MCF 10A (cell line): ENCODE measurements at regions of chr1 and their contacts with region 1.

Region 1: GRCh38 chr1:117059678-117060440 is at the start of gene TTF2:
- DNase-seq: peak; percentile 100
- H3K4me3 Mint-ChIP-seq: no peak within 1 kb of the TSS
- H3K27ac Mint-ChIP-seq: no peak within 1 kb of the TSS
- H3K4me1 Mint-ChIP-seq: peaks cover 30% of the 10 kb centered on the region
- H3K27me3 Mint-ChIP-seq: no peaks in the 10 kb centered on the region
- CTCF ChIP-seq: no peak
- total RNA-seq, gene TTF2: 28.4 and 38.6 TPM in 2 replicates

Region 2: GRCh38 chr1:116570358-116571200 is 489.3 kb before region 1 on chr1 and contains the start of gene CD58:
- CTCF ChIA-PET with region 1: interaction called, 9 read pairs
- POLR2A ChIA-PET with region 1: interaction called, 7 read pairs
- intact Hi-C with region 1: loop called (anchors 1 kb)
- DNase-seq: peak; percentile 86
- H3K4me3 Mint-ChIP-seq: peak within 1 kb of the TSS; percentile 69
- H3K27ac Mint-ChIP-seq: peak within 1 kb of the TSS; percentile 91
- H3K4me1 Mint-ChIP-seq: peaks cover 30% of the 10 kb centered on the region
- H3K27me3 Mint-ChIP-seq: no peaks in the 10 kb centered on the region
- CTCF ChIP-seq: peak; percentile 74
- total RNA-seq, gene CD58: 11.0 and 13.4 TPM in 2 replicates

Region 3: GRCh38 chr1:116737020-116737854 is 322.6 kb before region 1 on chr1:
- CTCF ChIA-PET with region 1: interaction called, 59 read pairs
- POLR2A ChIA-PET with region 1: interaction called, 3 read pairs
- intact Hi-C with region 1: loop called (anchors 1 kb)
- DNase-seq: peak; percentile 60
- H3K4me3 Mint-ChIP-seq: no peak overlapping the region
- H3K27ac Mint-ChIP-seq: no peak overlapping the region
- H3K4me1 Mint-ChIP-seq: no peaks in the 10 kb centered on the region
- H3K27me3 Mint-ChIP-seq: peaks cover 11% of the 10 kb centered on the region
- CTCF ChIP-seq: peak; percentile 87

Region 4: GRCh38 chr1:116881879-116882520 is 177.9 kb before region 1 on chr1:
- CTCF ChIA-PET with region 1: interaction called, 3 read pairs
- POLR2A ChIA-PET with region 1: interaction called, 13 read pairs
- intact Hi-C with region 1: no loop called
- DNase-seq: peak; percentile 86
- H3K4me3 Mint-ChIP-seq: no peak overlapping the region
- H3K27ac Mint-ChIP-seq: peak overlapping the region; percentile 55
- H3K4me1 Mint-ChIP-seq: peaks cover 8% of the 10 kb centered on the region
- H3K27me3 Mint-ChIP-seq: no peaks in the 10 kb centered on the region
- CTCF ChIP-seq: peak; percentile 12

Region 5: DNA sequence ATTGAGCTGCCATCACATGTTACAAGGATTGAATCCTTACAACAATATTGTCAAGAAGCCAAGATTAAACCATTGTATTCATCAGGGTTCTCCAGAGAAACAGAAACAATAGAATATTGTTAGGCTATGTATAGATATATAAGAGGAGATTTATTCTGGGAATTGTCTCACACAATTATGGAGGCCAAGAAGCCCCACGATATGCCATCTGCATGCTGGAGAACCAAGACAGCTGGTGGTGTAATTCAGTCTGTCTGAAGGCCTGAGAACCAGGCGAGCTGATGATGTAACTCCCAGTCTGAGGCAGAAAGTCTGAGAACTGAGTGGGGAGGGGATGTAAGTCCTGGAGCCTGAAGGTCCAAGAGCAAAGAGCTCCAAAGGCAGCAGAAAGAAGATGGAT is 14.2 kb before region 1 on chr1:
- CTCF ChIA-PET with region 1: interaction called, 13 read pairs
- POLR2A ChIA-PET with region 1: no interaction called
- intact Hi-C with region 1: no loop called
- DNase-seq: no peak
- H3K4me3 Mint-ChIP-seq: no peak overlapping the region
- H3K27ac Mint-ChIP-seq: no peak overlapping the region
- H3K4me1 Mint-ChIP-seq: no peaks in the 10 kb centered on the region
- H3K27me3 Mint-ChIP-seq: no peaks in the 10 kb centered on the region
- CTCF ChIP-seq: no peak

Region 6: DNA sequence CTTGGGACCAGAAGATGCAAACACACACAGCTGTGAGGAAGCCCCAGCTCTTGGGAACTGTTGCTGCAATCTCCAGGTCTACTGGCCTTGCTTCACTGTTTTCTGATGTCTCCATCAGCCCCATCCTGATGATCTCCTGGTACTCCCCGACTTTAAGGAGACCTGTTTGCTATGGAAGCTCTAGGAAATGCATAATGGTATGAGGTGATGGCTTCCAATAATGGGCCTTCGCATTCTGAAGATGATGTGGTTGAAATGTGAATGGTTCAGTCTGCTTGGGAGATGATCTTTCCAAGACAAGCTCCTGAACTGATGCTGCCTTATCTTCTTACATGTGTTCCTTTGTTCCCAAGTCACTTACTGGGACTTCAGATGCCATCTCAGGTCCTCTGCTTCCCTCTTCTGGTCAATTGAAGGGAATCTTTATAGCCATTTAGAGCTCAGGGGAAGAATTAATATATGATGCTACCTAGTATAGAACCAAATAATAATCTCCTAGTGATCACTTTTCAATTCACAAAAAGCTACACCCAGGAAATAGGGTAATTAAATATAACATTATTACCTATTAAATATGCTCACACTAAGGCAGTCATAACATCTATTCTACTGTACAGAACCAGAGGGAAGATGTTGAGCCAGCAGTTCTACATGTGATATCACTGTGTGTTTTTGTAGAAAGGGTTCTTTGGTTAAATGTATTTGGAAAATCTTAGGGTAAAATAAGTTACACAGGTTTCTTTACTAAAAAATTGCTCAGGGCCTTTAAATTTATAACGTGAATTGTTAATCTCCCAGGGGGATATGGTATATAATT is 224.7 kb after region 1 on chr1:
- CTCF ChIA-PET with region 1: interaction called, 110 read pairs
- POLR2A ChIA-PET with region 1: interaction called, 13 read pairs
- intact Hi-C with region 1: no loop called
- DNase-seq: peak; percentile 73
- H3K4me3 Mint-ChIP-seq: no peak overlapping the region
- H3K27ac Mint-ChIP-seq: no peak overlapping the region
- H3K4me1 Mint-ChIP-seq: no peaks in the 10 kb centered on the region
- H3K27me3 Mint-ChIP-seq: no peaks in the 10 kb centered on the region
- CTCF ChIP-seq: peak; percentile 71

Region 7: GRCh38 chr1:117367047-117368018 is 307.5 kb after region 1 on chr1 and contains the start of gene MAN1A2:
- CTCF ChIA-PET with region 1: no interaction called
- POLR2A ChIA-PET with region 1: interaction called, 12 read pairs
- intact Hi-C with region 1: loop called (anchors 10 kb)
- DNase-seq: peak; percentile 84
- H3K4me3 Mint-ChIP-seq: peak within 1 kb of the TSS; percentile 91
- H3K27ac Mint-ChIP-seq: peak within 1 kb of the TSS; percentile 83
- H3K4me1 Mint-ChIP-seq: peaks cover 25% of the 10 kb centered on the region
- H3K27me3 Mint-ChIP-seq: no peaks in the 10 kb centered on the region
- CTCF ChIP-seq: no peak
- total RNA-seq, gene MAN1A2: 32.0 and 33.4 TPM in 2 replicates